AG04449 (cell line): ENCODE measurements at regions of chr11 and their contacts with region 1.

Region 1: DNA sequence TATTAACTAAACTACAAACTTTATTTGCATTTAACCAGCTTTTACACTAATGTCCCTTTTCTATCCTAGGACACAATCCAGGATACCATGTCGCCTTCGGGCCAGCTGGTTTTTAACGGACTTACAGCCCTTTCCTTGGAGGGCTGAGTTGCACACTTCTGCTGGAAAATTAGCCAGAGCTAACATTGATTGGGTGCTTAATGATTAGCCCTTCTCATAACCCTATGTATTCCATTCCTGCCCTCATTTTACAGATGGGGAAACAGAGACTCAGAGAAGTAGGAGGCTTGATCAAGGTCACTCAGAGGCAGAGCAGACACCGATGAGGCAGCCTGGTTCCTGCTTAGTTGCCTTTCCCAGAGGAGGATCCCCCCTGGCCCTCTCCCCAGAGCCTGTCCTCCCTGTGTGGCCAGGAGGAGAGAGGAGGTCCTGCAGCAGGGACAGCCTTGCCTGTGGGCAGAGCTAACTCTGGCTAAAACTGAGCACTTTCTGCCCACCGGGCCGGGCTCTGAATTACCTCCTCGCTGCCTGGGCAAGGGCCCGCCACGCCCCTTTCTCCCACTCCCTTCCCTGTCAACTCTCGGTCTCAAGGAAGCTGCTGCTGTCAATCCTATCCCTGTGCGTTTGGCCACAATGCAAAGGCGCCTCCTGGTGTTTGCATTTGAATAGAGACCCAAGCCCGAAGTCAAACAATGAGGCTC is 59.6 kb upstream of the PAX6 start:
- DNase-seq: no peak
- H3K4me3 ChIP-seq: no peak overlapping the region
- CTCF ChIP-seq: peak; percentile 75

Region 2: GRCh38 chr11:31397239-31397834 is 473.4 kb before region 1 on chr11:
- CTCF ChIA-PET with region 1: interaction called, 17 read pairs
- POLR2A ChIA-PET with region 1: no interaction called
- DNase-seq: no peak
- H3K4me3 ChIP-seq: no peak overlapping the region
- CTCF ChIP-seq: peak; percentile 30

Region 3: DNA sequence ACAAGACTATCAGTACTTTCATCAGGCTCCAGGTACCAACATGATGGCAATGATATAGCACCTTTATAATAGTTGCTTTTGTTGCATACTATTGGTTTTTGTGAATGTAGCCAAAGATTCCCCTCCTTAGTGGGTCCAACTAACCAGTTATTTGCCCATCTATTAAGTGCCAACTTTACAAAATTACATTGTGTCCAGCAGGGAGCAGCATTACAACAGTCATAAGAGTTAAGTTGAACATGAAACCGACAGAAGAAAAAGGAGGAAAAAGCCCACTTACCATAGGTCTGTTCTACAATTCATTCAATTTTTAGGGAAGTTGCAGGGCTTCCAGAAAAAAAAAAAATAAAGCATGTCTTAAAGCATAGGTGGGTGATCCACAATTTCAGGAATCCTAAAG is 382.9 kb before region 1 on chr11:
- CTCF ChIA-PET with region 1: interaction called, 32 read pairs
- POLR2A ChIA-PET with region 1: no interaction called
- DNase-seq: no peak
- H3K4me3 ChIP-seq: no peak overlapping the region
- CTCF ChIP-seq: peak; percentile 26

Region 4: DNA sequence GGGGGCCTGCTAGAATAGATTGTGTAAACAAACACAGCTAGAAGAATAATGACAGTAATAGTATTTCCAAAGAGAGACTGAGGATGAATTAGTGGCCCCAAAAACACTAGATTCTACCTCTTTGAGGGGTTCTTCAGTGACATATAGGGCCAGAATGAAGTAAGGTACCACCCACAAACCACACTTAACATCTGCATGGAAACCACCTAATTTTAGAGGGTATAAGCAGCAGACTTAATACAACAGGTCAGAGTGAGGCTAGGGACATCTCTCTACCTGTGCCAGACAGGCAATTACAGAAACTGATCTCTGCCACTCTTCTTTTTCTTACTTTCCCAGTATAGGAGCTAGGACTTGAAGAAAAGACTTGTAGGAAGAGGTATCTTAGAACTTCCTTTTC is 341.1 kb before region 1 on chr11:
- CTCF ChIA-PET with region 1: no interaction called
- POLR2A ChIA-PET with region 1: no interaction called
- DNase-seq: no peak
- H3K4me3 ChIP-seq: no peak overlapping the region
- CTCF ChIP-seq: no peak

Region 5: DNA sequence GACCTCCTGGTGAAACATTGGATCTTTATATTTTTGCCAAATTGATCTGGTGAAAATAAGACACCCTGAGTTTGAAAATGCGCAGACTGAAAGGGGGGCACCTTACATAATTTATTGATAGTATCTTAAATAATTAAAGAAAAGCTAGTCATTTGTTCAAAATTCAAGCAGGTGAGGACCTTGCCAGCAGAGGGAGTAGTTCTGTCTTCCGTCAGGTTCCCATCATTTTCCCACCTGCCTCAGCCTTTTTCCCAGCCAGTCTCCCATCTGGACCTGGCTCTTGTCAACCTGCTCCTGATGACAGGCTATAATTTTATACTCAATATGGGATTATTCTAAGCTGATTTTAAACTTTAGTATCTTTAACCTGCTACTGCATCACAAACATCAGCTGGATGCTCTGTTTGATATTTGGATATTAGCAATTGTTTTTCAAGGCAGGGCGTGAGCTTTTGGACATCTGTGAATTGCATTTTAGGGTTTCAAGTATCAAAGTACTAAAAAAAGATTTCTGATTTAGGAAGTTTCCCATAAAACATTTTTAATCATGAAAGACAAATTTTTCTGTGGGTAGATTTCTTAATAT is 229.2 kb before region 1 on chr11:
- CTCF ChIA-PET with region 1: interaction called, 36 read pairs
- POLR2A ChIA-PET with region 1: no interaction called
- DNase-seq: no peak
- H3K4me3 ChIP-seq: no peak overlapping the region
- CTCF ChIP-seq: peak; percentile 48

Region 6: DNA sequence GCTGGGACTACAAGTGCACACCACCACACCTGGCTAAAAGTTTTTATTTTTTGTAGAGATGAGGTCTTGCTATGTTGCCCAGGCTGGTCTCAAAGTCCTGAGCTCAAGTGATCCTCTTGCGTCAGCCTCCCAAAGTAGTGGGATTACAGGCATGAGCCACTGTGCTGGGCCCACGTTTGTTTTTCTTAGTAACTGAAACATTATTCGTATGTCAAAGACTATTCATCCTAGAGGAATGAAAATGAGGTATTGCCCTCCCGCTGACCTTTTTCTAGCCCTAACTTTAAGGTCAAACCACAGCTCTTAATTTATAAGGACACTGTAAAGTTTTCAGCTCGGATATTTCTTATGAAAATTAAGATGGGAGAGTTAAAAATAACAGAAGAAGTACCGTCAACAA is 26.4 kb before region 1 on chr11:
- CTCF ChIA-PET with region 1: interaction called, 10 read pairs
- POLR2A ChIA-PET with region 1: no interaction called
- DNase-seq: no peak
- H3K4me3 ChIP-seq: no peak overlapping the region
- CTCF ChIP-seq: no peak

Region 7: GRCh38 chr11:31995525-31996094 is 124.9 kb after region 1 on chr11:
- CTCF ChIA-PET with region 1: no interaction called
- POLR2A ChIA-PET with region 1: no interaction called
- DNase-seq: peak; percentile 5
- H3K4me3 ChIP-seq: peak overlapping the region; percentile 42
- CTCF ChIP-seq: no peak